Gastrocnemius medialis (tissue), 4 donors: ENCODE measurements at regions of chr2 and their contacts with region 1.

Region 1: GRCh38 chr2:28821295-28821958 is 10.8 kb downstream of the SPDYA start:
- DNase-seq: peak; percentile 12 to 28
- ATAC-seq: peak; percentile 70 to 94
- H3K4me3 ChIP-seq: no peak overlapping the region
- H3K27ac ChIP-seq: no peak overlapping the region
- H3K4me1 ChIP-seq: no peaks in the 10 kb centered on the region
- H3K27me3 ChIP-seq: no peaks in the 10 kb centered on the region
- CTCF ChIP-seq: peak; percentile 67 to 80 (median 74)
- POLR2A ChIP-seq: no peak

Region 2: DNA sequence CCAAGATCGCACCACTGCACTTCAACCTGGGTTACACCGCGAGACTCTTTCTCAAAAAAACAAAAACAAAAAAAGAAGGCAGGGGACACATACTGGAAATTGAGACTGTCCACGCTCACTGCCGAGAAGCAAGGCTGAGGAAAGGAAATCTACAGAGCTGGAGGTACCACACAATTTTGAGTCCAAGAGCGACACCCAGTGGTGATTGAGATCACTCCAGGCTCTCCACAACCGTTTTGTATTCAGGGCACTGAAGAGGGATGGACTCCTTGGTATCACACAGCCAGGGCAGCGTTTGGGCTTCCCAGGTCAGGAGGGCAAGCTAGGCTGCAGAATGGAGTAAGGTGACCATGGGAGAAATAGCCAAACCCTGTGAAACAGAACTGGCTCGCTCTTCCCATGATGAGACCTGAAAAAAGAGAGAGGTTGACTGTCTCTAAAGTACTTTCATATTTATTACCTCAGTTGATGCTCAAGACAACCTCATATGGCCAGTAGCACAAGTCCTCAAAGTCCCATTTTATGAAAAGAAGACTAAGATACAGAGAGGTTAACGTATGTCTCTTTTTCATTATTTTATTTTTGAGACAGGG is 1250.9 kb after region 1 on chr2:
- in situ Hi-C with region 1: no loop called
- intact Hi-C with region 1: loop called (anchors 10 kb)
- DNase-seq: peak; percentile 13 to 33
- ATAC-seq: peak; percentile 69 to 88
- H3K4me3 ChIP-seq: no peak overlapping the region
- H3K27ac ChIP-seq: no peak overlapping the region
- H3K4me1 ChIP-seq: no peaks in the 10 kb centered on the region
- H3K27me3 ChIP-seq: peaks cover 0 to 2% (median 0%) of the 10 kb centered on the region in 3 donors
- CTCF ChIP-seq: peak in 4 of 5 experiments; percentile 9 to 54 (median 44)
- POLR2A ChIP-seq: no peak